ENCODE measurements at regions of chr9 and their contacts with region 1.

Region 1: DNA sequence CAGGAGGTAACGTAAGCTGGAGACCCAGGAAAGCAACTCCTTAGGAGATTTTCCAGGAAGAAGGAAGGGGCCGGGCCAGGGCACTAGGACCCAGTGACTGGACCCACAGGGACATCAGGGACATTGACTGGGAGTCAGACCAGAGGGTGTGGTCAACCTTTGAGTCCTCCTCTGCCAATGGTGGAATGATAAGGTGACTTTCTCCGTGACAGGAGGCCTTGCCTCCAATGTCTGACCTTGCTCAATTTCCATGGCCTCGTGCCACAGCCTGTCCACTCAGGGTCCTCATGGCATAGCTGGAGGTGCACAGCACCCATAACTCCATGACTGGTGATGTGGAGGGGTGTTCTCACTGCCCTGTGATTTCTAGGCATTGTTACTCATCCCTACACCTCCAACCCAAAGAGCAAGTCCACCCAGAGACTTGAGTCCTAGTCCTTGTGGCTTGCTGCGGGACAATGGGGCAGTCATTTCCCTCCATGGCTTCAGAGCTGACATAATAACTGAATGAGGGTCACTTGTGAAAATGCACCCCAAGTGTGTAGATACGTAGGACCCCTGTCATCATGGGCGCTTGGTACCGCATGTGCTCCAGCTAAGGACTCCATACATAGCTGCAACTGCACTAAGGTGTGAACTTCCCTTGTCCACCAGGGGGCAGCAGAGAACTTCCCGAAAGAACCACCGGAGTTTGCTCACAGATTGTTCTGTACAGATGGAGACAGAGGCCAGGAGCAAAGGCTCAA is 4.1 kb upstream of the AMBP start:
- DNase-seq: peak; percentile 53 to 84 (median 72)
- ATAC-seq: peak; percentile 59
- H3K4me3 ChIP-seq: no peak overlapping the region
- H3K4me3 Mint-ChIP-seq: no peak overlapping the region
- H3K27ac ChIP-seq: no peak overlapping the region
- H3K27ac Mint-ChIP-seq: no peak overlapping the region
- H3K4me1 ChIP-seq: no peaks in the 10 kb centered on the region
- H3K4me1 Mint-ChIP-seq: no peaks in the 10 kb centered on the region
- H3K27me3 ChIP-seq: no peaks in the 10 kb centered on the region
- H3K27me3 Mint-ChIP-seq: peaks cover 16% of the 10 kb centered on the region
- CTCF ChIP-seq: peak; percentile 84

Region 2: DNA sequence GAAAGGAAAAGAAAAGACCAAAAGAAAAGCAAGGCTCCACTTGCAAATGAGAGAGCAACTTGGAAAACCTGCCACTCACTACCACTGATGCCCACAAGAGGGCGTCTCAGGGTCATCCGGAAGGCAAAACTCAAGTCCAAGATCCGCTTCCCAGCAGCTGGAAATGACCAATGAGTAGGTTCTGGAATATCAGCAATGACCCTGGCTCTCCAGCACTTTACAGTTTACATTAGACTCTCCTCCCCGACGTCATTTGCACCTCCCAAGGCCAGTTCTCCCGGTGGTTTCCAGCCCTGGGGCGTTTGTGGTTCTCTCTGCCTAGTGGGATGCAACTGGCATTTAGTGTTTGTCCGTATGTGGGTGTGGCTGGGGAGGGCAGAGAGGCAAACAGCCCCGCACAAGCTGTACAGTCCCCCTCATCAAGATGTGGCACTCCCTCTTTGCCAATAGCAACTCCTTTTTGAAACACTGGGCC is 399.9 kb before region 1 on chr9:
- CTCF ChIA-PET with region 1: no interaction called
- POLR2A ChIA-PET with region 1: no interaction called
- intact Hi-C with region 1: loop called in 1 of 2 experiments (anchors 5 kb)
- DNase-seq: peak in 11 of 14 experiments; percentile 10 to 56 (median 19)
- ATAC-seq: no peak
- H3K4me3 ChIP-seq: no peak overlapping the region
- H3K4me3 Mint-ChIP-seq: no peak overlapping the region
- H3K27ac ChIP-seq: no peak overlapping the region
- H3K27ac Mint-ChIP-seq: no peak overlapping the region
- H3K4me1 ChIP-seq: peaks cover 1% of the 10 kb centered on the region
- H3K4me1 Mint-ChIP-seq: no peaks in the 10 kb centered on the region
- H3K27me3 ChIP-seq: peaks cover 12 to 29% of the 10 kb centered on the region in 2 experiments
- H3K27me3 Mint-ChIP-seq: peaks cover 62% of the 10 kb centered on the region
- CTCF ChIP-seq: peak; percentile 67

Region 3: DNA sequence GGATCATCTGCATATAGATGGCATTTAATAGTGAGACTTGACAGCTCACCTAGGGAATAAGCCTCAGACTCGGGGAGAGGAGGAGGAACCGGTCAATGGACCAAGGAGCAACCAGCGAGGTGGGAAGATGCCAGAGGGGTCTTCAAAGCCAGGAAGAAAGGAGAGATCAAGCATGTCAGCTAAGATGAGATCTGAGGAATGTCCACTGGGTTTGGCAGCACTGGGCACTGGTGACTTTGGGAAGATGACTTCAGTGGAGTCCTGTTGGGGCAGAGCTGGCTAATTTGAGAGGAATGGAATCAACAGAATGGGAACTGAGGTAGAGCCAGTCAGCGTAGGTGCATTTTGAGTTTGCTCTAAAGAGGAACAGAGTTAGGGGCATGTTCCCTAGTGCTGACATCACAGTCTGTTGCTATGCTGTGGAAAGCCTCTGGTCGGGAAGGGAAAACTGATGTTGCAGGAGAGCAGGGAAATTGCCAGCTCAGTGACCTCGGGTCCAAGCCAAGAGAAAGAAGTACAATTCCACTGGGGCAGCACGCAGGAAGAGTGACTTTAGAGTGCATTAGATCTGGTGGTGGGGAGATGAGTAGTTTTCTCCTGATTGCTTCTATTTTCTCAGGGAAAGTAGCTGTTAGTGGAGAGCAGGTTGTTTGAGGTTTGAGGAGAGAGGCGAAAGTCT is 149.1 kb before region 1 on chr9:
- CTCF ChIA-PET with region 1: no interaction called
- POLR2A ChIA-PET with region 1: no interaction called
- intact Hi-C with region 1: no loop called
- DNase-seq: no peak
- ATAC-seq: no peak
- H3K4me3 ChIP-seq: no peak overlapping the region
- H3K4me3 Mint-ChIP-seq: no peak overlapping the region
- H3K27ac ChIP-seq: no peak overlapping the region
- H3K27ac Mint-ChIP-seq: no peak overlapping the region
- H3K4me1 ChIP-seq: no peaks in the 10 kb centered on the region
- H3K4me1 Mint-ChIP-seq: no peaks in the 10 kb centered on the region
- H3K27me3 ChIP-seq: peaks cover 0 to 4% of the 10 kb centered on the region in 2 experiments
- H3K27me3 Mint-ChIP-seq: no peaks in the 10 kb centered on the region
- CTCF ChIP-seq: no peak

Measured in CD4-positive, alpha-beta T cell (primary cell).